ENCODE measurements at regions of chr4 and their contacts with region 1.

Region 1: DNA sequence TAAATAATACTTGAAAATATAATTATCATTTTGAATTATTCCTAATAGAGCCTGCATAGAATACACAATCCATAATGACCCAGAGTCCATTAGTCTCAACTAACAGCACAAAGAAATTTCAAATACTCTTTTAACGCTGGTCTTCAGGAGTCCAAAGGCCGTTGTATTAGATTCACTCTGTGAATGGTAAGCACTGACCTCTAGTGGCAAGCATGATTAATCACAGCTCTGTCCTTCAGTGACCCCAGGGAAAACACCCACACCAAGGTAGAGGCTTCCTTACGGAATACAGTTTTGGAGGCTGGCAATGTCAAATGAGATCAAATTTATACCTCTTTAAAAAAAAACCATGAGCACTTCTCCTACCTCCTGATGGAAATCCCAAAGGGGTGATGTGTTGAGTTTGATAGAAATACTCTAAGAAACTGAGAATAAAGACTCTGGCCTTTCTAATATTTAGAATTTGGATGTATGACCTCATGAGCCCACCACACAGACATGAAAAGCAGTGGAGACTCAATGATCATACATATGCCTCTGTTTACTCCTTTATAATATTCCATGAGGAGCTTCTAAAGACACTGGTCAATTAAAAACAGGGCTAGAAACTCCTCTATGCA is 147.2 kb upstream of the DKK2 start:
- H3K4me3 Mint-ChIP-seq: no peak overlapping the region
- H3K27ac Mint-ChIP-seq: no peak overlapping the region
- H3K4me1 Mint-ChIP-seq: no peaks in the 10 kb centered on the region
- H3K27me3 Mint-ChIP-seq: no peaks in the 10 kb centered on the region

Region 2: DNA sequence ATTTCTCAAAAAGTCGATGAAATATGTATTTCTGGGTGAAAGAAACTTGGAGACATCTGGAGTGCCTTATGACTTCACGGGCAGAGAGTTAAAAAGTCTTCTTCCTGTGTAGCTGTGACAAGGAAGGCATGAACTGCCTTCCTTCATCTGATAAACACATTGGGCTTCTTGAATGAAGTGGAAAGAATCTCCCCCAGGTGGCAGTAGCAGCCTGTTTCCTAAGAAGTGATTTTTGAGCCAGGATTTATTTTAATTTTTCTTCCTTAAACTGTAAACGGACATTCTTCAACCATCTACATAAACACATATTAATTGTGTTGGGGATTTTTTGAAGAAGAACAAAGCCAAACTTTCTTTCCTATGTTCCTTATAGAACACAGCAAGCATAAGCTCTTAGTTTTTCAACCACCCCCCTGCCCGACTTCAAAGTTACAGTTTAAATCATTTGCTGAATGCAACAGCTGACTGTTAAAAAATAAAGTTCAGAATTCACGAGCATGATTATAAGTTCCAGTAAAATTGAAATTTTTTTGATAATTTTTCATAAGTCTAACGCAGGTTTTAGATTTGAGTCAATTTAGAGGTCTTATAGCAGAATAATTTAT is 813.7 kb before region 1 on chr4:
- intact Hi-C with region 1: loop called (anchors 10 kb)
- H3K4me3 Mint-ChIP-seq: no peak overlapping the region
- H3K27ac Mint-ChIP-seq: no peak overlapping the region
- H3K4me1 Mint-ChIP-seq: peaks cover 14% of the 10 kb centered on the region
- H3K27me3 Mint-ChIP-seq: peaks cover 5% of the 10 kb centered on the region

Region 3: GRCh38 chr4:107044170-107044569 is 139.1 kb before region 1 on chr4:
- intact Hi-C with region 1: loop called (anchors 5 kb)
- H3K4me3 Mint-ChIP-seq: no peak overlapping the region
- H3K27ac Mint-ChIP-seq: no peak overlapping the region
- H3K4me1 Mint-ChIP-seq: no peaks in the 10 kb centered on the region
- H3K27me3 Mint-ChIP-seq: peaks cover 11% of the 10 kb centered on the region

Region 4: GRCh38 chr4:107432451-107432850 is 249.2 kb after region 1 on chr4:
- intact Hi-C with region 1: no loop called
- H3K4me3 Mint-ChIP-seq: no peak overlapping the region
- H3K27ac Mint-ChIP-seq: no peak overlapping the region
- H3K4me1 Mint-ChIP-seq: no peaks in the 10 kb centered on the region
- H3K27me3 Mint-ChIP-seq: no peaks in the 10 kb centered on the region

Region 5: DNA sequence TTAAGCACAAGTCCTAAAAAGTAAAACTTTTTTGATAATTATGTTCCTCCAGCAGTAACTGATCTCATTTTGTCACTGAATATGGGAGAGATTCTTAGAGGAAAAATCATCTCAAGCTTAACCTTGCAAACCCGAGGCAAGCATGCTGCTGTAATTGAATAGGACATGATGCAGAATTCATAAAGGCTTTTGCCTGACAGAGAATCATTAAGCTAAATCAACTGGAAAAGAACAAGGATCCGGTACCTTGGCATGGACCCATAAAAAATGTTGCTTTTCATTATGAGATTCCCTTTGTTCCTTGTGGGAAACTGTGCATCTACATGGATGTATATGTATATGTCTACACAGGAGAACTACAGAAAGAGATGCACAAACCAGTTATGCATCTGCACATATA is 387.7 kb after region 1 on chr4:
- intact Hi-C with region 1: no loop called
- H3K4me3 Mint-ChIP-seq: no peak overlapping the region
- H3K27ac Mint-ChIP-seq: no peak overlapping the region
- H3K4me1 Mint-ChIP-seq: no peaks in the 10 kb centered on the region
- H3K27me3 Mint-ChIP-seq: no peaks in the 10 kb centered on the region

Region 6: DNA sequence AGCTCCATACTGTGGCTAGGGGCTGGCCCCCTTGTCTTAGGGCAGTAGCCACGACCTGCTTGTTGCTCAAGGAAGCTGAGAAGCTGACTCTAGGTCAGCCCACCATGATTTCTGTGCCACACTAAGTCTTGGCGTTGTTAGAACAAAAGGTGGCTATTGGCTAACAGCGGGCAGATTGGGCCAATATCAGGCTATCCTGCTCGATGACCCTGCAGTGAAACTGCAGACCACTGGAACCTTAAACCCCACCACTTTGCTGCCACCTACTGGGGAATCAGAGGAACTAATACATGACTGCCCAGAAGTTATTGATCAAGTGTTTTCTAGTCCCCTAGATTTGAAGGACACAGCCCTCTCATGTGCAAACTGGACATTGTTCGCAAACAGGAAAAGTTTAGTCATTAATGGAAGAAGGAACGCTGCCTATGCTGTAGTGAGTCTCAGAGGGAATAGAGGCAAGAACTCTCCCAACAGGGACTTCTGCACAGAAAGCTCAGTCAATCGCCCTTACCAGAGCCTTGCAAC is 553.7 kb after region 1 on chr4:
- intact Hi-C with region 1: loop called (anchors 10 kb)
- H3K4me3 Mint-ChIP-seq: no peak overlapping the region
- H3K27ac Mint-ChIP-seq: no peak overlapping the region
- H3K4me1 Mint-ChIP-seq: peaks cover 8% of the 10 kb centered on the region
- H3K27me3 Mint-ChIP-seq: no peaks in the 10 kb centered on the region

Measured in dendritic cell treated with granulocyte-macrophage colony-stimulating factor and Interleukin-4, amounts not matched to agents 40 ng/mL and 50 ng/mL, for 4 days (primary cell).